Vagina (tissue), 2 donors: ENCODE measurements at regions of chr2 and their contacts with region 1.

Region 1: DNA sequence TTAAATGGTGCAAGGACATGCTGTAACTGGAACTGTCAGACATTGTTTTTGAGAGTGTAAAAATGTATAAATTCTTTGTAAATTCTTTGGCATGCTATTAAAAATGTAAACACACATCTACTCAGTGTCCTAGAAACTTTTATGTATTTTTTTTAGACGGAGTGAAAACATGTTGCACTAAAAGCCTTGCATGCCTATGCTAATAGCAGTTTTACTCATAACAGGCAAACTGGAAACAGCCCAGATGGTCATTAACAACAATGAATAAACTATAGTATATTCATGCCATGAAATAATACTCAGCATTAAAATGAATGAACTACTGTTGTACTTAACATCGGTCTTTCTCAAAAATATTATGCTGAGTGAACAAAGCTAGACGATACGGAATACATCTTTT is 954.8 kb upstream of the DDX18 start:
- DNase-seq: no peak
- H3K4me3 ChIP-seq: no peak overlapping the region
- H3K27ac ChIP-seq: no peak overlapping the region
- H3K4me1 ChIP-seq: no peaks in the 10 kb centered on the region
- H3K27me3 ChIP-seq: no peaks in the 10 kb centered on the region
- CTCF ChIP-seq: no peak
- POLR2A ChIP-seq: no peak

Region 2: DNA sequence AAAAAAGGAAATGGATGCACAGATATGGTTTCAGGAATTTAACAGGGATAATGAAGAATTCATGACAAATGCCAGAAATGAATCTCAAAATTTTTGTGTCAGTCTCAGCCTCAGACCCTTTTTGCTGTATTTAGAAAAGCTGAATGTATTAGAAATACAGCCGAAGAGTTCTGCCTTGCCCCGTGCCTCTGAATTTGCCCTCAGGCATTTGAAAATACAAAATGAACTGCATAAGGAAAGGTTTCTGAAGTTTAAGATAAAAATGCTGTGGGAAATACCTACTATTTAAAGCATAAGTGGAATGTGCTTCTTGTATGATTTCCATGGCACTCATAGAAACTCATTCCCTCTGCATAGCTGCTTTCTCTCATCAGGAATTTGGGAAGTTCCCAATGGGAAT is 836.7 kb before region 1 on chr2:
- intact Hi-C with region 1: loop called (anchors 5 kb)
- DNase-seq: no peak
- H3K4me3 ChIP-seq: no peak overlapping the region
- H3K27ac ChIP-seq: no peak overlapping the region
- H3K4me1 ChIP-seq: no peaks in the 10 kb centered on the region
- H3K27me3 ChIP-seq: no peaks in the 10 kb centered on the region
- CTCF ChIP-seq: no peak
- POLR2A ChIP-seq: no peak

Region 3: DNA sequence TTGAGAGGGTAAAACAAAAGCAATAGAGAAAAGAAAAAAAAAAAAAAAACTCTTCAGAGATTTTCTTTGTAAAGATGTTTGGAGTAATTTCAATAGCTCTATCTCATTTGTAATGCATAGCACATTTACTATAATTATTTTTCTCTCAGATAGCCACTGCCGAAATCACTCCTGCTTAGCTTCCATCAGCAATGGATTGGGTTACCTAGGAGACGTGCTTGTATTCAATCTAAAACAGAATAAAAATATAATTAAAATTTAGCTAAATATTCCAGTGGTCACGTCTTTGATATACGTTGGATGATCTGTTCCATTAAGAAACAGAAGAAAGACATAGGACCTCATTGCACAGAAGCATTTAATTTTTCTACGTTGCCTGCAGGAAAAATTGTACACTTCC is 480.9 kb before region 1 on chr2:
- intact Hi-C with region 1: no loop called
- DNase-seq: no peak
- H3K4me3 ChIP-seq: no peak overlapping the region
- H3K27ac ChIP-seq: no peak overlapping the region
- H3K4me1 ChIP-seq: no peaks in the 10 kb centered on the region
- H3K27me3 ChIP-seq: no peaks in the 10 kb centered on the region
- CTCF ChIP-seq: no peak
- POLR2A ChIP-seq: no peak

Region 4: DNA sequence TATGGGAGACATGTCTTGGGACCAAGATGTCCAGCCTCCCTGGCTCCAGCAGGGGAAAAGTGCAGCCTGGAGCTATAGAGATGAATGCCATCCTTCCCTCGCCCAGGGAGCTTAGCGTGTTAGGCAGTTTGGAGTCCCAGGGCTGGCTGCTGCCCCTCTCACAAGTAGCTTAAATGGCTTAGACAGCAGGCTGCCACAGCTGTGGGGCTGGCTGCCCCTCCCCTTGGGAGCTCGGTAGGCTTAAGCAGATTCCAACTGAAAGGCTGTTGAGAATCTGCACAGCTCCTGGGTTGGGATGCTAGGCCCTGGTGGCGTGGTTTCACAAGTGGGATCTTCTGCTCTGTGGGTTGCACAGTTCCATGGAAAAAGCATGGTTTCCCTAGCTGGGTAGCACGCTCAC is 14.3 kb after region 1 on chr2:
- intact Hi-C with region 1: no loop called
- DNase-seq: no peak
- H3K4me3 ChIP-seq: no peak overlapping the region
- H3K27ac ChIP-seq: no peak overlapping the region
- H3K4me1 ChIP-seq: no peaks in the 10 kb centered on the region
- H3K27me3 ChIP-seq: no peaks in the 10 kb centered on the region
- CTCF ChIP-seq: no peak
- POLR2A ChIP-seq: no peak